ENCODE measurements at regions of chr19 and their contacts with region 1.

Region 1: GRCh38 chr19:3572132-3572854 is 451 bp upstream of the HMG20B start:
- DNase-seq: peak; percentile 100
- ATAC-seq: peak; percentile 96
- H3K4me3 Mint-ChIP-seq: peak overlapping the region; percentile 73
- H3K27ac Mint-ChIP-seq: no peak overlapping the region
- H3K4me1 Mint-ChIP-seq: peaks cover 11% of the 10 kb centered on the region
- H3K27me3 Mint-ChIP-seq: no peaks in the 10 kb centered on the region

Region 2: DNA sequence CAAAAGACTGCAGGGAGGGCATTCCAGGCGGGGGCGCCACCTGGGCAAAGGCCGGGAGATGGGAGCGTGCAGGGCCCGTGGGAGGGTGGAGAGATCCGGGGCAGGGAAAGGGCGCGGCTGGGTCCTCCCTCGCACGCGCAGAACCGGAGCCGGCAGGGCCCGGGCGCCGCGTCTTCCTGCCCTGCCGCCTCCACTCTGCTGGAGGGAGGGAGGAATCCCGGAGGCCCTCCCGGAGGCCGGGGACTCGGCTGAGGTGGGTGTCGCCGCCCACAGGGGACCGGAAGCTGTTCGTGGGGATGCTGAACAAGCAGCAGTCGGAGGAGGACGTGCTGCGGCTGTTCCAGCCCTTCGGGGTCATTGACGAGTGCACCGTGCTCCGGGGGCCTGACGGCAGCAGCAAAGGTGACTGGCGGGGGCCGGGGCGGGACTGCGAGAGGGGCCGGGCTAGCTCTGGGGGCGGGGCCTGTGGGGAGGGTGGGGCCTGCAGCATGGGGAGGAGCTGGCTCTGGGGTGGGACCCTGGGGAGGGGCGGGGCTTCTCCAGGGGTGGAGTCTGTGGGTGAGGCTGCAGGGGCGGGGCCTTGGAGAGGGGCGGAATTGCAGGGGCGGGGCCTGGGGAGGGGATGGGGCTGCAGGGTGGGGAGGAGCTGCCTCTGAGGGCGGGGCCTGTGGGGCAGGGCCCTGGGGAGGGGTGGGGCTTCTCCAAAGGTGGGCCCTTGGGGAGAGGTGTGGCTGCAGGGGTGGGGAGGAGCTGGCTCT is 296.5 kb before region 1 on chr19:
- CTCF ChIA-PET with region 1: no interaction called
- POLR2A ChIA-PET with region 1: no interaction called
- intact Hi-C with region 1: loop called in 1 of 2 experiments (anchors 1 kb)
- DNase-seq: peak; percentile 99
- ATAC-seq: peak; percentile 83
- H3K4me3 Mint-ChIP-seq: peak overlapping the region; percentile 73
- H3K27ac Mint-ChIP-seq: peak overlapping the region; percentile 80
- H3K4me1 Mint-ChIP-seq: peaks cover 8% of the 10 kb centered on the region
- H3K27me3 Mint-ChIP-seq: peaks cover 9% of the 10 kb centered on the region

Region 3: GRCh38 chr19:3505598-3506383 is 66.5 kb before region 1 on chr19 and contains the start of gene FZR1:
- CTCF ChIA-PET with region 1: interaction called, 3 read pairs
- POLR2A ChIA-PET with region 1: interaction called, 4 read pairs
- intact Hi-C with region 1: loop called (anchors 1 kb)
- DNase-seq: peak; percentile 100
- ATAC-seq: peak; percentile 92
- H3K4me3 Mint-ChIP-seq: peak within 1 kb of the TSS; percentile 84
- H3K27ac Mint-ChIP-seq: peak within 1 kb of the TSS; percentile 86
- H3K4me1 Mint-ChIP-seq: peaks cover 45% of the 10 kb centered on the region
- H3K27me3 Mint-ChIP-seq: no peaks in the 10 kb centered on the region
- total RNA-seq, gene FZR1: 40.8 to 50.7 TPM

Region 4: DNA sequence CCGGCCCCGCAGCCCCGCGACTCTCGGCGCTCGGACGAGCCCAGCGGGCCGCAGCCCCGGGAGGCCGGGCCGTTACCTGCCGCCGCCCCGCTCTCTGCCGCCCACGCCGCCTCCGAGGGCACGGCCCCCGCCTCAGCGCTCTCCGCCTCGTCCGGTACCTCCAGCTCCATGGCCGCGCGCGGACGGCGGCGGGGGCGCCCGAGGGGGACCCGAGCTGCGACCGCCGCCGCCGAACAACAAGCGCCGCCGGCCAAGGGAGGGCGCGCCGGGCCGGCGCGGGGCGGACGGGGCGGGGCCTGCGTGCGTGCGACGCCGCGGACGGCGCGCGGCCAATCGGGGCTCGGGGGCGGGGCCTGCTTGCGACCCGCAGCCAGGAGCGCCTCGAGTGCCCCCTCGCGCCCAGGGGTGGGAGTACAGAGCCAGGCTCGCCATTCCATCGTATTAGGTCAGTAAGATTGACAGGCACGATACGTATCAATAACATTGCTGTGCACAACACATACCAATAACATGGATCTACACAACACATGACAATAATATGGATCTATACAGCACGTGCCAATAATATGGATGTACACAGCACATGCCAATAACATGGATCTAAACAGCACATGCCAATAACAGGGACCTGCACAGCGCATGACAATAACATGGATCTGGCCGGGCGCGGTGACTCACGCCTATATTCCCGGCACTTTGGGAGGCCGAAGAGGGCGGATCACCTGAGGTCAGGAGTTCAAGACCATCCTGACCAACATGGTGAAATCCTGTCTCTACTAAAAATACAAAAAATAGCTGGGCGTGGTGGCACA is 128.1 kb after region 1 on chr19 and contains the start of gene PIP5K1C:
- CTCF ChIA-PET with region 1: no interaction called
- POLR2A ChIA-PET with region 1: no interaction called
- intact Hi-C with region 1: loop called in 1 of 2 experiments (anchors 1 kb)
- DNase-seq: peak; percentile 97
- ATAC-seq: peak; percentile 95
- H3K4me3 Mint-ChIP-seq: peak within 1 kb of the TSS; percentile 87
- H3K27ac Mint-ChIP-seq: peak within 1 kb of the TSS; percentile 80
- H3K4me1 Mint-ChIP-seq: peaks cover 17% of the 10 kb centered on the region
- H3K27me3 Mint-ChIP-seq: no peaks in the 10 kb centered on the region
- total RNA-seq, gene PIP5K1C: 14.6 to 15.3 TPM

Region 5: GRCh38 chr19:3970808-3971598 is 398.7 kb after region 1 on chr19 and contains the start of gene DAPK3:
- CTCF ChIA-PET with region 1: no interaction called
- POLR2A ChIA-PET with region 1: no interaction called
- intact Hi-C with region 1: loop called in 1 of 2 experiments (anchors 5 kb)
- DNase-seq: peak; percentile 97
- ATAC-seq: peak; percentile 95
- H3K4me3 Mint-ChIP-seq: peak within 1 kb of the TSS; percentile 83
- H3K27ac Mint-ChIP-seq: peak within 1 kb of the TSS; percentile 58
- H3K4me1 Mint-ChIP-seq: peaks cover 22% of the 10 kb centered on the region
- H3K27me3 Mint-ChIP-seq: no peaks in the 10 kb centered on the region
- total RNA-seq, gene DAPK3: 26.7 to 27.6 TPM

Region 6: DNA sequence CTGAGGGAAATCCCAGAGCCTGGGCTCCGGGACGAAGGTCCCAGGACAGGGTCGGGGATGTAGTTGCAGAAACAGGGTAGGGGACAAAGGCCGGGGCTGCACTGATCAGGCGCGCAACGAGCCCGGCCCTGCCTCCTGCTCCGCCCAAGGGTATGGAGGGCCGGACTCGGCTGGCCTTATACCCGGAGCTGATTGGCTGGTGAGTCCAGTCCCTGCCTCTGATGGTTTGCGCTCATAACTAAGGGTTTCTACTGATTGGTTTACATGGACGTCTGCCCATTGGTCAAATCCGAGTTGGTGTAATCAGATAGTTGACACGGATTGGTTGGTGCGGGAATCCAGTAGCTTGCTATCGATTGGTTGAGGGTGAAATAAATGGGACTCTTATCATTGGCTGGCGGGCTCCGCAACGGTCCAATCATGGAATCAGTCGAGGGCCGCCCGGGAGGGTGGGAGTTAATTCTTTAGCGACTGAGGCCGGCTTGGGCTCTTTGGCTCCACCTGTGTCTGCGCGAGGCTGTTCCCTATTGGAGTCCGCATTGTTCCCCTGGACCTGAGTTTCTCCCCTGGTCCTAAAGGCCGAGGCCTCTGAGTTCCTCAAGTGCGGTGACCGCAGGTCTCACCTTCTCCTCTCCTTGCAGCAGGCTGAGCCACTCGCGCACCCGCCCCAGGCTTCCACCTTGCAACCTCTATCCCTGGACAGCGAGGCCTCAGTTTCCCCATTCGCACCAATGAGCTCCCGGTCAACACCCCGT is 770.5 kb after region 1 on chr19:
- CTCF ChIA-PET with region 1: no interaction called
- POLR2A ChIA-PET with region 1: no interaction called
- intact Hi-C with region 1: loop called in 1 of 2 experiments (anchors 5 kb)
- DNase-seq: peak; percentile 97
- ATAC-seq: peak; percentile 91
- H3K4me3 Mint-ChIP-seq: peak overlapping the region; percentile 89
- H3K27ac Mint-ChIP-seq: peak overlapping the region; percentile 93
- H3K4me1 Mint-ChIP-seq: peaks cover 17% of the 10 kb centered on the region
- H3K27me3 Mint-ChIP-seq: no peaks in the 10 kb centered on the region